Natural killer cell (primary cell): ENCODE measurements at regions of chr6 and their contacts with region 1.

Region 1: GRCh38 chr6:72616406-72617015 is 5.4 kb upstream of the KCNQ5 start:
- DNase-seq: peak in 1 of 2 donors; percentile 69
- ATAC-seq: no peak
- H3K4me3 ChIP-seq: no peak overlapping the region
- H3K4me3 Mint-ChIP-seq: peak overlapping the region; percentile 45
- H3K27ac ChIP-seq: no peak overlapping the region
- H3K27ac Mint-ChIP-seq: peak overlapping the region; percentile 35 to 65
- H3K4me1 ChIP-seq: peaks cover 21% of the 10 kb centered on the region
- H3K4me1 Mint-ChIP-seq: peaks cover 24 to 37% of the 10 kb centered on the region in 2 donors
- H3K27me3 ChIP-seq: no peaks in the 10 kb centered on the region
- H3K27me3 Mint-ChIP-seq: no peaks in the 10 kb centered on the region
- CTCF ChIP-seq: peak; percentile 71

Region 2: DNA sequence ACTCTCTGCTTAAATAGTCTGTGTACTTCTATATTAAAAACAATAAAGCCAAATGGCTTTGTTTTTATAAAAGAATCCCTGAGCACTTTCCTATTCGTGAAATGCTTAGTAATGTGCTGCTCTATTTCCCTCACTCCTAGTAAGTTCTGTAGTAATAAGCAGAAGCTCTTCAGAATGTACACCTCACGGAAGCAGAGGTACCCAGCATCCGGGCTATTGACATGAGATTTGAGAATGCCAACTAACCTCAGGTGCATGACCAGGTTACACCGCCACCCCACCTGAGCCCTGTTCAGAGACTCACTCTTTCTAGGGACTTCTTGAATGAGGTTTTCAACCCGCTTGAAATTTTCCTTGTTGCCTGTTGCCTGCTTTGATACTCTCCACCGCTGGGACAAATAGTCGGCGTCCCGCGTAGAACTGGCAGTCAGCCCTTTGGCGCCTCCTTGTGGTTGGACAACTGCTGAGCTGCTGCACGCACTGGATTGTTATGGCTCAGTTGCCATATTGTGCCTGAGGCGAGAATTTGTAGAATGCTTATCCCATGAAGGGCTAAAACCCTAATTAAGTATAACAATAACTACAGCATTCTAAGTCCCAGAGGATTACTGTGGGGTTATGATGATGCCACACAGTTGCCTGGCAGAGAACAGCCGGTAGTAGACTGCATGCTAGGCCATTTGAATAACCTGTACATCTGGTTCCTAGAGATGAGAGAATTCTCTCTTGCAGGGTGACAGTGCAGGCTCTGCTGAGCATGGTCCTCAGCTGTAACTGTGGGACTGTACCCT is 513.3 kb after region 1 on chr6:
- intact Hi-C with region 1: loop called (anchors 1 kb)
- DNase-seq: peak; percentile 77 to 86
- ATAC-seq: peak; percentile 90 to 98 (median 95)
- H3K4me3 ChIP-seq: no peak overlapping the region
- H3K4me3 Mint-ChIP-seq: peak overlapping the region; percentile 14
- H3K27ac ChIP-seq: no peak overlapping the region
- H3K27ac Mint-ChIP-seq: no peak overlapping the region
- H3K4me1 ChIP-seq: peaks cover 3% of the 10 kb centered on the region
- H3K4me1 Mint-ChIP-seq: peaks cover 6% of the 10 kb centered on the region in 2 donors
- H3K27me3 ChIP-seq: no peaks in the 10 kb centered on the region
- H3K27me3 Mint-ChIP-seq: no peaks in the 10 kb centered on the region
- CTCF ChIP-seq: peak; percentile 94

Region 3: DNA sequence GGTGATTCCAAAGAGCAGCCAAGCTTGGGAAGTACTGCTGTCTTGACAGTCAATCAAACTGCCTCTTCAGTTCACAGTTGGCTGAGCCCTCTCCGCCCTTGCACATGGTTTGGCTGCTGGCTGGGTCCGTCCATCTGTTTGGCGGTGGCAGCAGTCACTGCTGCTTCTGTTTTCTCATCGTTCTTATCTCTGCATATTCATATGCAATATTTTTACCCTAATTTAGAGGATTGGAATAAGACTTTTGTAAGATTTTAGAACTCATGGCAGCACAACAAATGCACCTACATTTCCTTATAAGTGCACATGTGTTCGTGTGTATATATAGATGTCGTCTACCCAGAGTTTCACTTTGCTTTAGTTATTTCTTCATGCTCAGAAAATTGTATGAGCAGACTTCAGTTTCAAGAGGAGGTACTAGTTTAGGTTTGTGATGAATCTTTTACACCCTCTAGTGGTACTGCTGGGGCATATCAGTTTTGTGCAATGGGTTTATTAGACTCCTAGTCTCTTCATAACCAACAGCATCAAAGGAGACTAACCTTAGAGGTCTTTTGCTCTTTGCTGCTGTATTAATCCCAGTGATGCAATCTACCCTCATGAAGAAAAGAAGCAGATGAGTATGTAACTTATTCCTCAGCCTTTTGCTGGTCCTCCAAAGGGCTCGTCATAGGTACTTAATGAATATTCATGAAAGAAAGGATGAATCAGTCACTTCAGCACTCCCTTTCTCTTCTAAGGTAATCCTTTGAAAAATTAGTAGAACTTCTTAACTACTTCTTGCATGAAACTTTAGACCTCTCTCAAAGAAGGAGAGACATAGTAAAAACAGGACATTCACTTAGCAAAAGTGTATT is 564.5 kb after region 1 on chr6:
- intact Hi-C with region 1: loop called (anchors 2 kb)
- DNase-seq: peak in 1 of 2 donors; percentile 65
- ATAC-seq: peak; percentile 88 to 96 (median 92)
- H3K4me3 ChIP-seq: no peak overlapping the region
- H3K4me3 Mint-ChIP-seq: peak overlapping the region; percentile 63
- H3K27ac ChIP-seq: no peak overlapping the region
- H3K27ac Mint-ChIP-seq: peak overlapping the region in 1 of 2 donors; percentile 39
- H3K4me1 ChIP-seq: peaks cover 4% of the 10 kb centered on the region
- H3K4me1 Mint-ChIP-seq: peaks cover 6 to 8% of the 10 kb centered on the region in 2 donors
- H3K27me3 ChIP-seq: no peaks in the 10 kb centered on the region
- H3K27me3 Mint-ChIP-seq: no peaks in the 10 kb centered on the region
- CTCF ChIP-seq: peak; percentile 83

Region 4: DNA sequence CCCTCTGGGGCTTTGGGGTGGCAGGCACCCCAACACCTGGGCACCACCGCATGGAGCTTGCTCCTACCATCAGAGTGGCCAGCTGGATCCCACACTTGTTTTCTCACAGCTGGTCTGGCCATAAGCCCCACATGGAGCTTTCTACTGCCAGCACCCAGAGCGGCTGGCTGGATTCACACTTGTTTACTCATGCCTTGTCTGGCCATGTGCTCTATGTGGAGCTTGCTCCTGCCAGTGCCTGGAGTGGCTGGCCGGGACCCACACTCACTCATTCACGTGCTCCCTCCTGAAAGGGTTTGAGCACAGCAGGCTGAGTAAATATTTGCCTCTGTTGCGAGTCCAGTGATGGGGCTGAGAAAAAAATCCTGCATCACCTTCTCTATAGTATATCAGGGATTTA is 1566.5 kb after region 1 on chr6:
- intact Hi-C with region 1: no loop called
- DNase-seq: no peak
- ATAC-seq: no peak
- H3K4me3 ChIP-seq: no peak overlapping the region
- H3K4me3 Mint-ChIP-seq: no peak overlapping the region
- H3K27ac ChIP-seq: no peak overlapping the region
- H3K27ac Mint-ChIP-seq: no peak overlapping the region
- H3K4me1 ChIP-seq: no peaks in the 10 kb centered on the region
- H3K4me1 Mint-ChIP-seq: no peaks in the 10 kb centered on the region
- H3K27me3 ChIP-seq: no peaks in the 10 kb centered on the region
- H3K27me3 Mint-ChIP-seq: no peaks in the 10 kb centered on the region
- CTCF ChIP-seq: no peak